CD14-positive monocyte (primary cell): ENCODE measurements at regions of chr7 and their contacts with region 1.

Region 1: DNA sequence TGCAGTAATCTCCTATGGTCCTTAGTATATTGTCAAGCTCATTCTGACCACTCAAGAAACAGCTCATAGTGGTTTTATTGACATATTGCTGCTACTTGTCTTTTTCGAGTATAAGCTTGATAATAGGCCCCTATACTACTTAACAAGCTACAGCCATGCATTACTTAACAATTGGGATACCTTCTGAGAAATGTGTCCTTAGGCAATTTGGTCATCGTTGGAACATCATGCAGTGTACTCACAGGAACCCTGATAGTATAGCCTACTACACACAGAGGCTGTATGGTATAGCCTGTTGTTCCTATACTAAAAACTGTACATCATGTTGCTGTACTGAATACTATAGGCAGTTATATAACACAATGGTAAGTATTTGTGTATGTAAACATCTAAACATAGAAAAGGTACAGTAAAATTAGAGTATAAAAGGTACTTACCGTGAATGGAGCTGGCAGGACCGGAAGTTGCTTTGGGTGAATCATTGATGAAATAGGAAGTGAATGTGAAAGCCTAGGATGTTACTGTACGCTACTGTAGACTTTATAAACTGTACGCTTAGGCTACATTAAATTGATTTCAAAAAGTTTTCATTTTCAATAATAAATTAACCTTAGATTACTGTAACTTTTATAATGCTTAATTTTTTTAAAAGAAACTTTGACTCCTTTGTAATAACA is 160.9 kb downstream of the LRRC4 start:
- DNase-seq: peak; percentile 63 to 83 (median 75)
- H3K4me3 ChIP-seq: no peak overlapping the region
- H3K4me3 Mint-ChIP-seq: no peak overlapping the region
- H3K27ac ChIP-seq: peak overlapping the region in 1 of 2 donors; percentile 73
- H3K27ac Mint-ChIP-seq: peak overlapping the region in 1 of 7 donors; percentile 33
- H3K4me1 ChIP-seq: peaks cover 21 to 32% of the 10 kb centered on the region in 2 donors
- H3K4me1 Mint-ChIP-seq: peaks cover 29% of the 10 kb centered on the region
- H3K27me3 ChIP-seq: no peaks in the 10 kb centered on the region
- H3K27me3 Mint-ChIP-seq: no peaks in the 10 kb centered on the region
- CTCF ChIP-seq: no peak

Region 2: GRCh38 chr7:127158659-127159058 is 711.7 kb before region 1 on chr7:
- intact Hi-C with region 1: no loop called
- DNase-seq: no peak
- H3K4me3 ChIP-seq: no peak overlapping the region
- H3K4me3 Mint-ChIP-seq: no peak overlapping the region
- H3K27ac ChIP-seq: no peak overlapping the region
- H3K27ac Mint-ChIP-seq: no peak overlapping the region
- H3K4me1 ChIP-seq: no peaks in the 10 kb centered on the region
- H3K4me1 Mint-ChIP-seq: no peaks in the 10 kb centered on the region
- H3K27me3 ChIP-seq: no peaks in the 10 kb centered on the region
- H3K27me3 Mint-ChIP-seq: peaks cover 0 to 2% (median 0%) of the 10 kb centered on the region in 3 donors
- CTCF ChIP-seq: peak; percentile 12

Region 3: DNA sequence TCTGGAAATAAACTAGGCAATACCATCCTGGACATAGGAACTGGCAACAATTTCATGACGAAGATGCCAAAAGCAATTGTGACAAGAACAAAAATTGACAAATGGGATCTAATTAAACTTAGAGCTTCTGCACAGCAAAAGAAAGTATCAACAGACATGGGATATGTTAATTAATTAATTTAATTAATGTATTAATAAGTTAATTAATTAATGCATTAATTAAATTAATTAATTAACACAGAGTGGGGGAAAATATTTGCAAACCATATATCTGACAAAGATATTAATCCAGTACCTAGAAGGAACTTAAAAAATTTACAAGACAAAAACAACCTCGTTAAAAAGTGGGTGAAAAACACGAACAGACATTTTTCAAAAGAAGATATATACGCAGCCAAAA is 368.6 kb before region 1 on chr7:
- intact Hi-C with region 1: no loop called
- DNase-seq: no peak
- H3K4me3 ChIP-seq: no peak overlapping the region
- H3K4me3 Mint-ChIP-seq: no peak overlapping the region
- H3K27ac ChIP-seq: no peak overlapping the region
- H3K27ac Mint-ChIP-seq: no peak overlapping the region
- H3K4me1 ChIP-seq: no peaks in the 10 kb centered on the region
- H3K4me1 Mint-ChIP-seq: no peaks in the 10 kb centered on the region
- H3K27me3 ChIP-seq: peaks cover 7% of the 10 kb centered on the region in 2 donors
- H3K27me3 Mint-ChIP-seq: peaks cover 5 to 24% (median 6%) of the 10 kb centered on the region in 3 donors
- CTCF ChIP-seq: no peak

Region 4: GRCh38 chr7:127819975-127820731 is 50.2 kb before region 1 on chr7:
- intact Hi-C with region 1: loop called in 1 of 2 experiments (anchors 10 kb)
- DNase-seq: peak; percentile 34 to 74 (median 39)
- H3K4me3 ChIP-seq: peak overlapping the region in 2 of 3 experiments; percentile 5 to 18
- H3K4me3 Mint-ChIP-seq: peak overlapping the region; percentile 45 to 50
- H3K27ac ChIP-seq: peak overlapping the region in 1 of 2 donors; percentile 82
- H3K27ac Mint-ChIP-seq: peak overlapping the region; percentile 83 to 93 (median 87)
- H3K4me1 ChIP-seq: peaks cover 19 to 21% of the 10 kb centered on the region in 2 donors
- H3K4me1 Mint-ChIP-seq: peaks cover 47% of the 10 kb centered on the region
- H3K27me3 ChIP-seq: no peaks in the 10 kb centered on the region
- H3K27me3 Mint-ChIP-seq: peaks cover 0 to 2% (median 0%) of the 10 kb centered on the region in 3 donors
- CTCF ChIP-seq: no peak